A549 (cell line): ENCODE measurements at regions of chr15 and their contacts with region 1.

Region 1: GRCh38 chr15:62742409-62743171 is 300.0 kb upstream of the TPM1 start:
- DNase-seq: peak; percentile 70 to 84
- ATAC-seq: peak; percentile 75 to 87
- H3K4me3 ChIP-seq: peak overlapping the region; percentile 40
- H3K27ac ChIP-seq: peak overlapping the region; percentile 75 to 78
- H3K4me1 ChIP-seq: peaks cover 44% of the 10 kb centered on the region
- CTCF ChIP-seq: peak; percentile 96
- EP300 ChIP-seq: peak in 1 of 2 experiments; percentile 23; a peak in 1 of 5 replicates
- POLR2A ChIP-seq: no peak
- RAD21 ChIP-seq: peak; percentile 66 to 70

Region 2: GRCh38 chr15:62462268-62462667 is 280.3 kb before region 1 on chr15:
- CTCF ChIA-PET with region 1: no interaction called
- POLR2A ChIA-PET with region 1: no interaction called
- DNase-seq: no peak
- ATAC-seq: no peak
- H3K4me3 ChIP-seq: no peak overlapping the region
- H3K27ac ChIP-seq: no peak overlapping the region
- H3K4me1 ChIP-seq: no peaks in the 10 kb centered on the region
- CTCF ChIP-seq: no peak
- EP300 ChIP-seq: no peak
- POLR2A ChIP-seq: no peak
- RAD21 ChIP-seq: no peak

Region 3: DNA sequence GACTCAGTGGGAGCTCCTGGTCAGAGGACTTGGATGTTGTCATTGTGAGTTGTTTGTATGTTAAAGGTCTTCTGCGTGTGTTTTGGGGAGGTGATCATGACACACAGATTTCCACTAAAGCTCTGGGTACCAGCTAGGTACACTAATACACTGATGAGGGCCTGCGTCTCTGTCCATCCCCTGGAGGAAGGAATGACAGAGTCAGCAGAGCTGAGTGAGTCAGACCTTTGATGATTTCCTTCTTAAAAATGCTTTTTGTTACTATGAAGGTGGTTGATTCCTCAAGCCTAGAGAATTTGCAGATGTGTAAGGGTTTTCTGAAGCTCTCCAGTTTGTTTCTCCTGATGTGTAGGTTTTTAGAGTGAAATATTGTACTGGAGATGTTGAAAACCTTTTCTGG is 124.2 kb before region 1 on chr15:
- CTCF ChIA-PET with region 1: interaction called, 11 read pairs
- POLR2A ChIA-PET with region 1: no interaction called
- DNase-seq: peak in 1 of 2 experiments; percentile 22
- ATAC-seq: peak; percentile 83 to 89
- H3K4me3 ChIP-seq: no peak overlapping the region
- H3K27ac ChIP-seq: no peak overlapping the region
- H3K4me1 ChIP-seq: peaks cover 15% of the 10 kb centered on the region
- CTCF ChIP-seq: no peak; the same call in 2 of the 3 replicates
- EP300 ChIP-seq: no peak
- POLR2A ChIP-seq: no peak
- RAD21 ChIP-seq: no peak

Region 4: GRCh38 chr15:62722237-62722636 is 20.4 kb before region 1 on chr15:
- CTCF ChIA-PET with region 1: interaction called, 104 read pairs
- POLR2A ChIA-PET with region 1: interaction called, 6 read pairs
- DNase-seq: no peak
- ATAC-seq: no peak
- H3K4me3 ChIP-seq: no peak overlapping the region
- H3K27ac ChIP-seq: no peak overlapping the region
- H3K4me1 ChIP-seq: no peaks in the 10 kb centered on the region
- CTCF ChIP-seq: no peak
- EP300 ChIP-seq: no peak
- POLR2A ChIP-seq: no peak
- RAD21 ChIP-seq: no peak

Region 5: GRCh38 chr15:62758126-62758951 is 15.7 kb after region 1 on chr15:
- CTCF ChIA-PET with region 1: interaction called, 151 read pairs
- POLR2A ChIA-PET with region 1: interaction called, 3 read pairs
- DNase-seq: peak; percentile 31 to 41
- ATAC-seq: peak; percentile 70 to 73
- H3K4me3 ChIP-seq: no peak overlapping the region
- H3K27ac ChIP-seq: peak overlapping the region; percentile 36 to 57
- H3K4me1 ChIP-seq: peaks cover 38% of the 10 kb centered on the region
- CTCF ChIP-seq: no peak
- EP300 ChIP-seq: no peak
- POLR2A ChIP-seq: no peak
- RAD21 ChIP-seq: no peak

Region 6: DNA sequence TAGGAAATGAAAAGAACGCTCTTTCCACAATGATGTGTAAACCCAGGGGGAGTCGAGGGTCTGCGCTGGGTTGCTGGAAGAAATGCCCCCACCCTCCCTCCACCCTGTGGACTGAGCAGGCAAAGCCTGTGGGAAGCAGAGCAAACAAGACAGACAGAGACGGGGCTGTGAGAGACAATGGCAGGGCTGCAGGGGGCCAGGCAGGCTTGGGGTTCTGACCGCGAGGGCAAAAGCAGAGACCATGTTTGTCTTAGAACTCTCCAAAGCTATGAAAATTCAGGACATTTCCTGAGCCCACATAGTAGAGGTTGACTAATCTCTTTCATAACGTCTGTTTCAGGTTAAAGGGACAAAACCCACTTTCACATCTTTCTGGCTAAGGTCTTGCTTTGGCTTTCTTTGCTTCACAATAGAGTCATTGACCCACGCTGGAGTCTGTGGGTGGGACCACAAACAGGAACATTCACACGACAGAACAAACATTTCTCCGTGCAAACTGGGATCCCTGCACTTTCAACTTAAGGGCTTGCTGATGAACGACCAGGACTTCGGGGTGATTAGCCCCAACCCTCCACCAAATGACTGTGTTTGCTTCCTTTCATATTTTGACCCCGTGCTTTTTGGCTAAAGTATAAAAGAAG is 144.0 kb after region 1 on chr15:
- CTCF ChIA-PET with region 1: interaction called, 11 read pairs
- POLR2A ChIA-PET with region 1: no interaction called
- DNase-seq: peak; percentile 41 to 46
- ATAC-seq: peak; percentile 53 to 68; a peak in 5 of 6 replicates
- H3K4me3 ChIP-seq: no peak overlapping the region
- H3K27ac ChIP-seq: peak overlapping the region; percentile 66 to 89
- H3K4me1 ChIP-seq: peaks cover 46% of the 10 kb centered on the region
- CTCF ChIP-seq: no peak
- EP300 ChIP-seq: no peak
- POLR2A ChIP-seq: no peak
- RAD21 ChIP-seq: no peak

Region 7: DNA sequence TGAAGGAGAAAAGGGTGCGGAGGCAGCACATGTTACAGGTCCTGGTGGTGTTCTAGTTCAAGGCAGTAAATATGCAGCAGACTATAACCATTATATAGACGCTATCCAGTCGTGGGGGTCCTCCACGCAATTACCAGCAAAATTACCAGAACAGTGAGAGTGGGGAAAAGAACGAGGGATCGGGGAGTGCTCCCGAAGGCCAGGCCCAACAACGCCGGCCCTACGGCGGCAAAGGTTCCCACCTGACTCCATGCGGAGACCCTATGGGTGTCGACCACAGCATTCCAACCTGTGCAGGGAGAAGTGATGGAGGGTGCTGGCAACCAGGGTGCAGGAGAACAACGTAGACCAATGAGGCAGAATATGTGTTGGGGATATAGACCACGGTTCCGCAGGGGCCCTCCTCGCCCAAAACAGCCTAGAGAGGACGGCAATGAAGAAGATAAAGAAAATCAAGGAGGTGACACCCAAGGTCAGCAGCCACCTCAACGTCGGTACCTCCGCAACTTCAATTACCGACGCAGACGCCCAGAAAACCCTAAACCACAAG is 211.0 kb after region 1 on chr15:
- CTCF ChIA-PET with region 1: no interaction called
- POLR2A ChIA-PET with region 1: no interaction called
- DNase-seq: no peak
- ATAC-seq: no peak
- H3K4me3 ChIP-seq: no peak overlapping the region
- H3K27ac ChIP-seq: no peak overlapping the region
- H3K4me1 ChIP-seq: peaks cover 18% of the 10 kb centered on the region
- CTCF ChIP-seq: no peak
- EP300 ChIP-seq: no peak
- POLR2A ChIP-seq: no peak
- RAD21 ChIP-seq: no peak